Endothelial cell of umbilical vein (primary cell): ENCODE measurements at regions of chr6 and their contacts with region 1.

Region 1: GRCh38 chr6:73461537-73462350 is at the start of gene MTO1:
- DNase-seq: peak; percentile 90
- H3K4me3 ChIP-seq: peak within 1 kb of the TSS; percentile 80 to 92 (median 81)
- H3K27ac ChIP-seq: peak within 1 kb of the TSS; percentile 71
- H3K4me1 ChIP-seq: peaks cover 6% of the 10 kb centered on the region
- H3K27me3 ChIP-seq: no peaks in the 10 kb centered on the region
- CTCF ChIP-seq: no peak
- POLR2A ChIP-seq: peak; percentile 97
- total RNA-seq, gene MTO1: 24.8 and 25.1 TPM in 2 replicates

Region 2: DNA sequence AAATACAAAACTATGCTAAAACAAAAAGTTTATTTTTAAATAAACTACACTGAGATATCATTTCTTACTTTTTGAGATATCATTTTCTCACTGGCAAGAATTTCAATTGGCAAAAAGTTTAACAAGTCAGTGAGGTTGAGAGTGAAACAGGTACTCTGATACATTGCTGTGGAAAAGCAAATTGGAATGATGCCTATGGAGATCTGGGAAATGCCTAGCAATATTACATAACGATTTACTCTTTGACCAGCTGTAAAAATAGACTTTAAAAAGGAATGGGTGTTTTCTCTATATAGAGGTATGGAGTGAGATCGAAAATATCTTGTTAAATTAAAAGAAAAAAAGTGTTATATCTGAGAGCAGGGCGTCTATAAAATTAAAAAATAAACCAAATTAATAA is 26.5 kb before region 1 on chr6:
- CTCF ChIA-PET with region 1: no interaction called
- POLR2A ChIA-PET with region 1: no interaction called
- dilution Hi-C with region 1: no loop called
- intact Hi-C with region 1: no loop called
- DNase-seq: no peak
- H3K4me3 ChIP-seq: no peak overlapping the region
- H3K27ac ChIP-seq: no peak overlapping the region
- H3K4me1 ChIP-seq: no peaks in the 10 kb centered on the region
- H3K27me3 ChIP-seq: no peaks in the 10 kb centered on the region
- CTCF ChIP-seq: no peak
- POLR2A ChIP-seq: no peak

Region 3: GRCh38 chr6:73451223-73452107 is 10.3 kb before region 1 on chr6:
- CTCF ChIA-PET with region 1: interaction called, 11 read pairs
- POLR2A ChIA-PET with region 1: interaction called, 7 read pairs
- dilution Hi-C with region 1: no loop called
- intact Hi-C with region 1: loop called (anchors 1 kb)
- DNase-seq: peak; percentile 57
- H3K4me3 ChIP-seq: peak overlapping the region; percentile 47 to 87 (median 73)
- H3K27ac ChIP-seq: peak overlapping the region; percentile 70
- H3K4me1 ChIP-seq: peaks cover 5% of the 10 kb centered on the region
- H3K27me3 ChIP-seq: no peaks in the 10 kb centered on the region
- CTCF ChIP-seq: no peak
- POLR2A ChIP-seq: no peak